B cell (primary cell): ENCODE measurements at regions of chr1 and their contacts with region 1.

Region 1: DNA sequence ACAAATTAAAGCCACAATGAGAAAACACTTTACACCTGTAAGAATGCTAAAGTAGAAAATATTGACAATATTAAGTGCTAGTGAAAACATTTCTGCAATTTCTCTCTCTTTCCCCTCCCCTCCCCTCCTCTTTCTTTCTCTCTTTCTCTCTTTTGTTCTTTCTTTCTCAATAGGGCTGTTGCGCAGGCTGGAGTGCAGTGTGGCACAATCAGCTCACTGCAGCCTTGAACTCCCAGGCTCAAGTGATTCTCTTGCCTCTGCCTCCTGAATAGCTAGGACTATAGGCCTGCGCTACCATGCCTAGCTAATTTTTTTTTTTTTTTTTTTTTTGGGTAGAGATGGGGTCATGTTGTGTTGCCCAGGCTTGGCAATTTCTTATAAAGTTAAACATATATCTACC is 5.9 kb upstream of the SHISAL2A start:
- DNase-seq: no peak
- ATAC-seq: no peak
- H3K4me3 ChIP-seq: no peak overlapping the region
- H3K4me3 Mint-ChIP-seq: no peak overlapping the region
- H3K27ac ChIP-seq: no peak overlapping the region
- H3K27ac Mint-ChIP-seq: no peak overlapping the region
- H3K4me1 ChIP-seq: peaks cover 40 to 47% of the 10 kb centered on the region in 2 donors
- H3K4me1 Mint-ChIP-seq: peaks cover 51% of the 10 kb centered on the region
- H3K27me3 ChIP-seq: no peaks in the 10 kb centered on the region
- H3K27me3 Mint-ChIP-seq: no peaks in the 10 kb centered on the region
- CTCF ChIP-seq: no peak

Region 2: DNA sequence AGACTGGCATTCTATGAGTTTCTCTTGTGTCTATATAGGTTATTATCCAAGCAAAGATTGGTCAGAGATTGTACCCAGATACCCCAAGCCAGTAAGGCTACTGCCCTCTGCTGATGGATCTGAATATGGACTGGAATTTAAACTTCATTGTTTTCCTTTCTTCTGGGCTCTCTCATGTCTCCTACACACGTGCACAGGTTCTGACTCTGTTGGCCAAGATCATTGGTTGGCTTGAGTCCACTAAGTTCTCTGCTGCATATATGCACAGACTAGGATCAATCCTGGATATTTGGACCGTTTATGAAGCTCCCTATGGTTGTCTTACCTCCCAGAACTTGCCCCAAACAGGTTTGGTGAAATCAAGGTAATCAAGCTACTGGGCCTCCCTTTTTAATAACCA is 330.7 kb before region 1 on chr1:
- CTCF ChIA-PET with region 1: no interaction called
- POLR2A ChIA-PET with region 1: no interaction called
- intact Hi-C with region 1: no loop called
- DNase-seq: peak; percentile 36
- ATAC-seq: no peak
- H3K4me3 ChIP-seq: no peak overlapping the region
- H3K4me3 Mint-ChIP-seq: no peak overlapping the region
- H3K27ac ChIP-seq: no peak overlapping the region
- H3K27ac Mint-ChIP-seq: no peak overlapping the region
- H3K4me1 ChIP-seq: no peaks in the 10 kb centered on the region
- H3K4me1 Mint-ChIP-seq: no peaks in the 10 kb centered on the region
- H3K27me3 ChIP-seq: no peaks in the 10 kb centered on the region
- H3K27me3 Mint-ChIP-seq: no peaks in the 10 kb centered on the region
- CTCF ChIP-seq: peak; percentile 65

Region 3: GRCh38 chr1:52645261-52645660 is 18.2 kb after region 1 on chr1:
- CTCF ChIA-PET with region 1: interaction called, 5 read pairs
- POLR2A ChIA-PET with region 1: interaction called, 17 read pairs
- intact Hi-C with region 1: loop called (anchors 1 kb)
- DNase-seq: no peak
- ATAC-seq: no peak
- H3K4me3 ChIP-seq: no peak overlapping the region
- H3K4me3 Mint-ChIP-seq: no peak overlapping the region
- H3K27ac ChIP-seq: peak overlapping the region in 1 of 2 donors; percentile 31
- H3K27ac Mint-ChIP-seq: peak overlapping the region; percentile 67
- H3K4me1 ChIP-seq: peaks cover 19 to 29% of the 10 kb centered on the region in 2 donors
- H3K4me1 Mint-ChIP-seq: peaks cover 56% of the 10 kb centered on the region
- H3K27me3 ChIP-seq: no peaks in the 10 kb centered on the region
- H3K27me3 Mint-ChIP-seq: no peaks in the 10 kb centered on the region
- CTCF ChIP-seq: no peak